A673 (cell line): ENCODE measurements at regions of chrX and their contacts with region 1.

Region 1: DNA sequence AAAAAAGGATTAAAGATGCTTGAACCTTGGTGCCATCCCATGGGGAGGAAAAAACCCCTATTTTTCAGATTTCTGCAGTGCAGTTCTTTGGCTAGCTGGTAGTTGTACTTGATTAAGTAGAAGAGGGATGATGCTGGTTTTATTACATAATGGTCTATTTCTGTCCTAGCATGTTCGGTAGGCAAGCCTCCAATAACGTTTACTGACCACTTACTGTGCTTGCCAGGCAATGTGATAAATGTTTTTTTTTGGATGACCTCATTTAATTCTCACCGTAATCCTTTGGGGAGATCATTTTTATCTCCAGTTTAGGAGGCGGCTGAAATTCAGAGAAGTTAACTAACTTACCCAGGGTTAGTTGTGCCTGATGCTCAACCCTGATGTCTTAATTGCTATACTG is 92.1 kb upstream of the RPA4 start:
- DNase-seq: no peak
- H3K4me3 ChIP-seq: no peak overlapping the region
- H3K27ac ChIP-seq: no peak overlapping the region
- H3K4me1 ChIP-seq: no peaks in the 10 kb centered on the region
- H3K27me3 ChIP-seq: no peaks in the 10 kb centered on the region
- CTCF ChIP-seq: no peak

Region 2: DNA sequence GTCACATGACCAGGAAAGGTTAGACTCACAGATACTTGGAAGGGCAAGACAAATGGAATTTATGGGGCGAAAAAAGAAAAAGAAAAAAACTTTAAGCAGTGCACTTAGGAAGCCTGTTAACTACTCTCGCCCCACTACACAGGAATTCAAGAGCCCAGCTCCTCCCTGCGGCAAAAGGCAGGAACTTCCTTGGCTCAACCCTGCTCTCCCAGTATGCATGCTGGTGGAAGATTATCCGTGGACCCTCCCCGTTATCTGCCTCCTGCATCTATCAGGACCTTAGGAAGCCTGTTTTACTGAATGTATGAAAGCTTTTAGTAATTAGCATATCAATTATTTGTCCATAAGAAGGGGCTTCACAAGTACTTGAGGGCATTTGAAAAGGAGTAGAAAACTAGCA is 52.0 kb after region 1 on chrX:
- CTCF ChIA-PET with region 1: no interaction called
- POLR2A ChIA-PET with region 1: no interaction called
- intact Hi-C with region 1: loop called (anchors 10 kb)
- DNase-seq: peak; percentile 3
- H3K4me3 ChIP-seq: no peak overlapping the region
- H3K27ac ChIP-seq: no peak overlapping the region
- H3K4me1 ChIP-seq: no peaks in the 10 kb centered on the region
- H3K27me3 ChIP-seq: no peaks in the 10 kb centered on the region
- CTCF ChIP-seq: no peak

Region 3: DNA sequence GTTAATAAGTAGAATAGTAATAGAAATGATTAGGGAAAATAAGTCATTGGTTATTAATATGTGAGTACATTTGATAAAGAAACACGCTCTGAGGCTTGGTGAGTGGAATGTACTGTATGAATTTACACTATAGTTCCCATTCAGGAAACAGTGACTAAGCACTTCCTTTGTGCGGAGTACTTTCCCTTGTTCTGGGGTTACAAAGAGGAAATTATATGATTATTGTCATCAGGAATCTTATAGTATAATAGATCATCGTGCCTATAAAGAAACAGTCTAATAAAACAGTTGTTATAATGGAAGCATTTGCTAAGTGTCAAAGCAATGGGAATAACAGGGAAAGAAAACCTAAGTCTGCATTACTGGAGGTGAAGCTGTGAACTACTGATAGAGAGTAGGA is 230.1 kb after region 1 on chrX:
- CTCF ChIA-PET with region 1: no interaction called
- POLR2A ChIA-PET with region 1: no interaction called
- intact Hi-C with region 1: no loop called
- DNase-seq: peak; percentile 68
- H3K4me3 ChIP-seq: no peak overlapping the region
- H3K27ac ChIP-seq: no peak overlapping the region
- H3K4me1 ChIP-seq: peaks cover 7% of the 10 kb centered on the region
- H3K27me3 ChIP-seq: no peaks in the 10 kb centered on the region
- CTCF ChIP-seq: no peak